Activated CD4-positive, alpha-beta memory T cell treated with anti-CD3 and anti-CD28 coated beads for 36 hours (primary cell): ENCODE measurements at regions of chrX and their contacts with region 1.

Region 1: DNA sequence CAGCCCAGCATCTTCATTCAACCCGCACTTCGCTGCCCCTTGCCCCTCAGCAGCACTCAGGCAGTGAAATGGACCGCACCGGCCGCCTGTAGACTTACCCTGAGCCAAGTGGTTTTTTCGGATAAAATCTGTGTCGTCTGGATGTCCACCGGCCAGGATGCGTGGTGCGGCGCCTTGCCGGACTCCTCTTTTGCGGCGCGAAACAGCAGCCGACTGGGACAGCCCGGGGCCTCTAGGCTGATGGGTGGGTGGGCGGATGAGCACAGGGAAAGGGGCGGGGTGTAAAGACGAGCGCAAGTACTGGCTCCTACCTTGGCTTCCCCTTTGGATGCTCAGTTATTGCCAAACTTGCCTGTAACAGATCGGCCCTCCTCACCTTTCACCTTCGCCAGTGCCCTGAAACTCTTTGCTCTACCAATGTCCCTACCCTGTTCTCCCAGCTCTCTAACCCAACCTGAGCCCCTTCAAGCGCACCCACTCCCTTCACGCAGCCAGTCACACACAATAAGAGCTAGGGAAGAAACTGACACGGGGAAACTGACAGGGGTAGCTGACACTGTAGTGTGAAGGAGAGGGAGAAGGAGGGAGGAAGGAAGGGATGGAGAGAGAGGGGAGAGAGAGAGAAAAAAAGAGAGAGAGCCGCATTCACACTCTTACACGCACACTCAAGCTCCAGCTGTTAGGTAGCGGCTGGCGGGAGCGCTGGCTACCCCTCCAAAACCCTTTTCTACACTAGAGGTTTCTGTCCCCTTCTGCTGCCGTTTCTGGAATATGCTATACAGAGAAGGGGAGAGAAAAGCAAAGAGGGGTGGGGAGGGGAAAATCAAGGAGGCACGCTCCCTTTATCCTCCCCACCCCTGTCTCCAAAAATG is 559 bp downstream of the TRPC5 start:
- DNase-seq: no peak
- H3K4me3 Mint-ChIP-seq: no peak overlapping the region
- H3K27ac Mint-ChIP-seq: no peak overlapping the region
- H3K4me1 Mint-ChIP-seq: no peaks in the 10 kb centered on the region
- H3K27me3 Mint-ChIP-seq: peaks cover 27% of the 10 kb centered on the region

Region 2: DNA sequence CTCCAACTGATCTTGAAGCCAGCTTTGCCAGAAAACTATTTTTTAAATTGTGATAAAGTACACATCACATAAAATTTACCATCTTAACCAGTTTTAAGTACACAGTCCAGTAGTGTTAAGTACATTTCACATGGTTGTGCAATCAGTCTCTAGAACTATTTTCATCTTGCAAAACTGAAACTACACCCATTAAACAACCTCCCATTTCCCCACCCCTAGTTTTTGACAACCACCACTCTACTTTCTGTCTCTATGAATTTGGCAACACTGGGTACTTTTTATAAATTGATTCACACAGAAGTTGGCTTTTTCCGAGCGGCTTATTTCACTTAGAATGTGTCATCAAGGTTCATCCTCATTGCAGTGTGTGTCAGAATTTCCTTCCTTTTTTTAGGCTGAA is 30.4 kb before region 1 on chrX:
- CTCF ChIA-PET with region 1: no interaction called
- POLR2A ChIA-PET with region 1: no interaction called
- intact Hi-C with region 1: loop called (anchors 2 kb)
- DNase-seq: no peak
- H3K4me3 Mint-ChIP-seq: no peak overlapping the region
- H3K27ac Mint-ChIP-seq: no peak overlapping the region
- H3K4me1 Mint-ChIP-seq: no peaks in the 10 kb centered on the region
- H3K27me3 Mint-ChIP-seq: peaks cover 3% of the 10 kb centered on the region

Region 3: GRCh38 chrX:112113460-112113859 is 31.4 kb after region 1 on chrX:
- CTCF ChIA-PET with region 1: no interaction called
- POLR2A ChIA-PET with region 1: no interaction called
- intact Hi-C with region 1: no loop called
- DNase-seq: no peak
- H3K4me3 Mint-ChIP-seq: no peak overlapping the region
- H3K27ac Mint-ChIP-seq: no peak overlapping the region
- H3K4me1 Mint-ChIP-seq: no peaks in the 10 kb centered on the region
- H3K27me3 Mint-ChIP-seq: no peaks in the 10 kb centered on the region